Activated T-helper 1 cell treated with anti-CD3 and anti-CD28 coated beads, Interleukin-12 subunit alpha, Interleukin-12 subunit beta, Interleukin-2, Interleukin-4 antibody, amounts not matched to agents 30 ng/mL and 10 ng/mL and 1 ng/mL, durations not matched to agents 14 hours and 24 hours and 36 hours (primary cell): ENCODE measurements at regions of chr2 and their contacts with region 1.

Region 1: GRCh38 chr2:86623651-86624541 is at the start of gene RNF103:
- DNase-seq: peak; percentile 92
- H3K4me3 Mint-ChIP-seq: peak within 1 kb of the TSS; percentile 93
- H3K27ac Mint-ChIP-seq: peak within 1 kb of the TSS; percentile 95
- H3K4me1 Mint-ChIP-seq: peaks cover 40% of the 10 kb centered on the region
- H3K27me3 Mint-ChIP-seq: peaks cover 24% of the 10 kb centered on the region
- total RNA-seq, gene RNF103: 13.6 and 14.3 TPM in 2 replicates

Region 2: GRCh38 chr2:86337244-86337836 is 286.6 kb before region 1 on chr2 and contains the start of gene REEP1:
- intact Hi-C with region 1: loop called (anchors 2 kb)
- DNase-seq: no peak
- H3K4me3 Mint-ChIP-seq: peak within 1 kb of the TSS; percentile 76
- H3K27ac Mint-ChIP-seq: no peak within 1 kb of the TSS
- H3K4me1 Mint-ChIP-seq: peaks cover 10% of the 10 kb centered on the region
- H3K27me3 Mint-ChIP-seq: peaks cover 68% of the 10 kb centered on the region
- total RNA-seq, gene REEP1: 0.26 and 0.81 TPM in 2 replicates

Region 3: GRCh38 chr2:86464652-86465051 is 159.2 kb before region 1 on chr2:
- intact Hi-C with region 1: loop called (anchors 5 kb)
- DNase-seq: no peak
- H3K4me3 Mint-ChIP-seq: peak overlapping the region; percentile 58
- H3K27ac Mint-ChIP-seq: peak overlapping the region; percentile 67
- H3K4me1 Mint-ChIP-seq: peaks cover 56% of the 10 kb centered on the region
- H3K27me3 Mint-ChIP-seq: no peaks in the 10 kb centered on the region

Region 4: DNA sequence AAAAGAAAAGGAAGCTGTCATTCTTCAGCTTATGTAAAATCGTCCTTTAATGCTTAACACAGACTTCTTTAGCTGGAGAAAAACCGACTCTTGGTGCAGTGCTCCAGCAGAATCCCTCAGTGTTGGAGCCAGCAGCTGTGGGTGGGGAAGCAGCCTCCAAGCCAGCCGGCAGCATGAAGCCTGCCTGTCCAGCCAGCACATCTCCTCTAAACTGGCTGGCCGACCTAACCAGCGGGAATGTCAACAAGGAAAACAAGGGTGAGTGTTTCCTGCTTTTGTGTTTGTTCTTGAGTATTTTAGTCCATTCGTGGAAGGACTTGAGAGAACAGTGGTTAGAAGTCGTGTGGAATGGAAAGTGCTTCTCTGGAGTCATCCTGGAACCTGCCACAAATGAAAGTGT is 143.8 kb before region 1 on chr2:
- intact Hi-C with region 1: loop called (anchors 1 kb)
- DNase-seq: no peak
- H3K4me3 Mint-ChIP-seq: no peak overlapping the region
- H3K27ac Mint-ChIP-seq: no peak overlapping the region
- H3K4me1 Mint-ChIP-seq: peaks cover 66% of the 10 kb centered on the region
- H3K27me3 Mint-ChIP-seq: no peaks in the 10 kb centered on the region

Region 5: GRCh38 chr2:86562922-86563649 is 60.8 kb before region 1 on chr2 and contains the start of gene CHMP3:
- intact Hi-C with region 1: loop called (anchors 1 kb)
- DNase-seq: peak; percentile 96
- H3K4me3 Mint-ChIP-seq: peak within 1 kb of the TSS; percentile 97
- H3K27ac Mint-ChIP-seq: peak within 1 kb of the TSS; percentile 98
- H3K4me1 Mint-ChIP-seq: peaks cover 46% of the 10 kb centered on the region
- H3K27me3 Mint-ChIP-seq: no peaks in the 10 kb centered on the region
- total RNA-seq, gene CHMP3: 27.7 and 27.9 TPM in 2 replicates

Region 6: DNA sequence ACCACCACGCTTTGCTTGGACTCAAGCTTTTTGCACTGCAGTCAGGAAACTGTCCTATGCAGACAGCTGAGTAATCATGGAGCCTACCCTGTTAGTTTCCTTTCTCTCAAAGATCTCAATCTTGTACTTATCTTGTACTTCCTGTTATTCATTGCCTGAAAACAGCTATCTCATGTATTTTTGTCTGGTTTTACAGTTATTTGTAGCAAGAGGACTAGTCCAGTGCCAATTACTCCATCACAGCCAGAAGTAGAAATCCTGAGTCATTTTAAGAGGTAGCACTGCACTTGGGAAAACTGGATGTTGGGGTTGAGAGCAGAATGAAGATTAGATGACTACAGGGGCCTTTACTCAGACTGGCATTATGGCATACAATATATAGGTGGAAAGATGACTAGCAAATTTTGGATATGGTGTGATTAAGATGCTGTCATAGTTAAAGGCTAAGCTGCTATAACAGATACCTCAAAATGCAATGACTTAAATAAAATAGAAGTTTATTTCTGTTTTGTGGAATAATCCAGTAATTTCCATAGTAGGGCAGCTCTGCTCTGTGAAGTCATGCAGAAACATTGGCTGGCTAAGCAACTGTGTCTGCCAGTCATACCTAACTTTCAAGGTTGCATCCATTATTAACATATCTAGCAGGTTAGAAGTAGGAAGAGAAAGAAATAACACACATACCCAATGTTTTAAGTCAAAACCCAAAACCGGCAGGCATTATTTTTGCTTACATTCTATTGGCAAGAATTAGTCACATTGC is 39.6 kb before region 1 on chr2:
- intact Hi-C with region 1: loop called (anchors 2 kb)
- DNase-seq: no peak
- H3K4me3 Mint-ChIP-seq: peak overlapping the region; percentile 5
- H3K27ac Mint-ChIP-seq: peak overlapping the region; percentile 78
- H3K4me1 Mint-ChIP-seq: peaks cover 15% of the 10 kb centered on the region
- H3K27me3 Mint-ChIP-seq: peaks cover 3% of the 10 kb centered on the region

Region 7: GRCh38 chr2:86645752-86646151 is 21.9 kb after region 1 on chr2:
- intact Hi-C with region 1: no loop called
- DNase-seq: no peak
- H3K4me3 Mint-ChIP-seq: no peak overlapping the region
- H3K27ac Mint-ChIP-seq: no peak overlapping the region
- H3K4me1 Mint-ChIP-seq: no peaks in the 10 kb centered on the region
- H3K27me3 Mint-ChIP-seq: peaks cover 4% of the 10 kb centered on the region

Region 8: GRCh38 chr2:86764661-86765307 is 140.9 kb after region 1 on chr2:
- intact Hi-C with region 1: loop called (anchors 5 kb)
- DNase-seq: peak; percentile 6
- H3K4me3 Mint-ChIP-seq: no peak overlapping the region
- H3K27ac Mint-ChIP-seq: no peak overlapping the region
- H3K4me1 Mint-ChIP-seq: peaks cover 17% of the 10 kb centered on the region
- H3K27me3 Mint-ChIP-seq: no peaks in the 10 kb centered on the region

Region 9: DNA sequence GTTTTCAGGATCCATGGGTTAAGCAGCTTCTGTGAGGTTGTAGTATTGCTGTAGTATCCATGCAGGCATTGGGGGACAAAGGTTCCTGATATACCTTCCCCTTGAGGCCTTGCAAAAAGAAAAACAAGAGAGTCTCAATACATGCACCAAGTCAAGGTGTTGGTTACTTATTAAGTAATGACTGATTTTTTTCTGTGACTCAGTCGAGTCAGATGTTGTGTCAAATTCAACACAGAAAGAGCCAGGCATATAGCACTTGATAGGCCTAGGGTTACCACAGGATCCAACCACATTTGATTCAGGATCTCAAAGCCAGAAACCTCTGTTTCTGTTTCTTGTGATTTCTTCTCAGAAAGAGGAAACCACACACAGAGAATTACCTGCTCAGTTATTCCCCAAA is 191.7 kb after region 1 on chr2:
- intact Hi-C with region 1: no loop called
- DNase-seq: no peak
- H3K4me3 Mint-ChIP-seq: no peak overlapping the region
- H3K27ac Mint-ChIP-seq: no peak overlapping the region
- H3K4me1 Mint-ChIP-seq: peaks cover 12% of the 10 kb centered on the region
- H3K27me3 Mint-ChIP-seq: peaks cover 20% of the 10 kb centered on the region